ENCODE measurements at regions of chr18 and their contacts with region 1.

Region 1: GRCh38 chr18:11980555-11981382 is 538 bp upstream of the IMPA2 start:
- DNase-seq: peak; percentile 99
- H3K4me3 Mint-ChIP-seq: peak overlapping the region; percentile 76
- H3K27ac Mint-ChIP-seq: peak overlapping the region; percentile 62
- H3K4me1 Mint-ChIP-seq: peaks cover 16% of the 10 kb centered on the region
- H3K27me3 Mint-ChIP-seq: peaks cover 7% of the 10 kb centered on the region

Region 2: GRCh38 chr18:11851146-11851805 is 129.5 kb before region 1 on chr18 and contains the start of gene CHMP1B:
- CTCF ChIA-PET with region 1: no interaction called
- POLR2A ChIA-PET with region 1: interaction called, 4 read pairs
- intact Hi-C with region 1: loop called (anchors 1 kb)
- DNase-seq: peak; percentile 98
- H3K4me3 Mint-ChIP-seq: peak within 1 kb of the TSS; percentile 100
- H3K27ac Mint-ChIP-seq: peak within 1 kb of the TSS; percentile 95
- H3K4me1 Mint-ChIP-seq: peaks cover 33% of the 10 kb centered on the region
- H3K27me3 Mint-ChIP-seq: no peaks in the 10 kb centered on the region
- total RNA-seq, gene CHMP1B: 21.2 to 22.0 TPM

Region 3: DNA sequence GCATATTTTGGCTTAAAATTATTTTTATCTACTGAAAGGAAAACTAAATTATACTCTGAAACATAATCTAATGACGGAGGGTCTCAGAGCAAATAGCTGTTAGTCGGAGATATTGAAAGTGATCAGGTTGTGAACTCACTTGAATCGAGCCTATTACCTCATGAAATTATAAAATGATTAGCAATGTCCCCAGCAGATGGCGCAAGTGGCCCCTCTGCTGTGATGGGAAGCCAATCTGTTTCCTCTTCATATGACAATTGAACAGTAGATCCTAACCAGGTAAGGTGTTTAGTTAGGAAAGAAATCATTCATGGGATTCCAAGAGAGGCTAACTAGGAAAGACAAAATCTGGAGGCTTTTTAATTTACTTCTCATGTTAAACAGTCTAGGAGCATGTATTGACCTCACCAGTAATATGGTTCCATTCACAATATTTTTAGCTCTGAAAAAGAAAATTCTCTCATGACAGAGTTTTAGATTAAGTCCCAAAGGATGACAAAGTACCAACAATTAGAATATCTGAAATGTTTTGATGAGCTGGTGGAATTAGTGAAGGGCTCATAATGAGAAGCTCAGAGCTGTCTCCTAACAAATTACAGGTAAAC is 42.8 kb before region 1 on chr18:
- CTCF ChIA-PET with region 1: interaction called, 36 read pairs
- POLR2A ChIA-PET with region 1: no interaction called
- intact Hi-C with region 1: loop called (anchors 2 kb)
- DNase-seq: peak; percentile 79
- H3K4me3 Mint-ChIP-seq: no peak overlapping the region
- H3K27ac Mint-ChIP-seq: no peak overlapping the region
- H3K4me1 Mint-ChIP-seq: no peaks in the 10 kb centered on the region
- H3K27me3 Mint-ChIP-seq: no peaks in the 10 kb centered on the region

Region 4: GRCh38 chr18:11995445-11996189 is 14.8 kb after region 1 on chr18:
- CTCF ChIA-PET with region 1: interaction called, 35 read pairs
- POLR2A ChIA-PET with region 1: no interaction called
- intact Hi-C with region 1: no loop called
- DNase-seq: peak; percentile 71
- H3K4me3 Mint-ChIP-seq: no peak overlapping the region
- H3K27ac Mint-ChIP-seq: no peak overlapping the region
- H3K4me1 Mint-ChIP-seq: peaks cover 8% of the 10 kb centered on the region
- H3K27me3 Mint-ChIP-seq: no peaks in the 10 kb centered on the region

Measured in activated CD4-positive, alpha-beta memory T cell treated with anti-CD3 and anti-CD28 coated beads for 36 hours (primary cell).